Right lobe of liver (tissue), 6 donors: ENCODE measurements at regions of chr19 and their contacts with region 1.

Region 1: DNA sequence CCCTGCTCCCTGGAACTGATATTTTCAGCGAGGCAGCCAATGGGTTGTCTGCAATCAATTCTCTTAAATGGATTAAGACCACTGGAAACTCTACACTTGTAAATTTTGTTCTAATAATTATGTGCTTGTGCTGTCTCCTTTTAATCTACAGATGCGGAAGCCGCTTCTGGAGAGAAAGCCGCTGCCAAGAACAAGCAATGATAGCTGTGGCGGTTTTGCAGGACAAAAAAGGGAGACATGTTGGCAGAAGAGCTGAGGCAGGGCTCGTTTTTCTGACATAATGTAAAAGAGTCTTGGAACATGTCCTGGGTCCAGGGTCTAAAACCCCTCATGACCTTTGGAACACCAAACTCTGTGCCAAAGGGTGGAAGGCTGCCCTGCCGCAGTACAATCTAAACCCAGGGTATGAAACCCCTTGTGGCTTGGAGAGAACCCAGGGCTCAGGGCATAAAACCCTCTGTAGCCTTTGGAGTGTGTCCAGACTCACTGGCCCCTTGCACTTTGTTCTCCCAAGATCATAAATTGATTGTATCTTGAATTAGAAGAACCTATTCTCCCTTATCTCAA is 12.7 kb downstream of the ZNF417 start:
- DNase-seq: peak in 1 of 3 donors; percentile 80
- ATAC-seq: peak; percentile 33 to 71 (median 57)
- H3K4me3 ChIP-seq: peak overlapping the region in 2 of 3 donors; percentile 13 to 17
- H3K27ac ChIP-seq: peak overlapping the region in 1 of 3 donors; percentile 55
- H3K4me1 ChIP-seq: peaks cover 0 to 31% (median 6%) of the 10 kb centered on the region in 4 donors
- H3K27me3 ChIP-seq: no peaks in the 10 kb centered on the region
- CTCF ChIP-seq: no peak
- POLR2A ChIP-seq: no peak

Region 2: DNA sequence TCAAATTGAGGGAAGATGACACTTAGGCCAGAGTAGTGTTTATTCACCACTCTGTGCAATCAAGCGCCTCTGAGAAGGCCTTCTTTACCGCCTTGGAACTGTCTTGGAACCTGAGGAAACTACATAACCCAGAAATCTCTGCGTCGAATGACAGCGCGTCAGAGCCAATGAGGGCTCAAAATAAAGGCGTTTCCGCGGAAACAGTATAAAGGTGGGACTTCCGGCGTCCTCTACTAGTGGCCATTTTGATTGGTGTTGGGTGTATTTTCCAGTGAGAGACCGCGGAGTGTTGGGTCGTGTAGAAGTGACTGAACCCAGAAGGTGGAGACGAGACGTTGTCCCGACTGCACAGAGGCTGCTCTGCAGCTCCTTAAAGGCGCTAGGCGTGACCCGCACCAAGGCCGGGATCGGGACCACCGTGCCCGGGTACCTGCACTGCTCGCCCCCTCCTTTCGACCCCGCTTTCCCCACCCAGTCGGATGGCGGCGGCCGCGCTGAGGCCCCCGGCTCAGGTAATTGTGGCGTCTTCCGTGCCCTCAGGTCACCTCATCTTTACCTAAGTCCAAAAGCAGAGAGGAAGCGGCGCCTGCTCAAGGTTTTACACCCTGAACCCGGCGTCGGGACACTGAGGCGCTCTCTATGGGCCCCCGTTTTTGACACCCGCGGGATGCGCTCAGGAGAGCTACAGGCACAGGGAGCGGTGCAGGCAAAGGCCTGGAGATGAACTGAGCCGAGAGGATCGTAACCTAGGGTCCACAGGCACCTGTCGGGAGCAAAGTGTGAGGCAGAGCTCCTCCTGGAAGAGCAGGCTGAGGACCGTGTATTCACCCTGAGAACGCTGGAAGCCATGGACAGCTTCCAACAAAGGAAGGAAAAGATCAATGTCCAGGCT is 156.9 kb before region 1 on chr19 and contains the start of gene ZNF776:
- intact Hi-C with region 1: loop called in 1 of 2 experiments (anchors 10 kb)
- DNase-seq: peak; percentile 74 to 86 (median 84)
- ATAC-seq: peak; percentile 97 to 99 (median 98)
- H3K4me3 ChIP-seq: peak within 1 kb of the TSS; percentile 82 to 96 (median 89)
- H3K27ac ChIP-seq: peak within 1 kb of the TSS; percentile 40 to 74 (median 41)
- H3K4me1 ChIP-seq: peaks cover 0 to 13% (median 0%) of the 10 kb centered on the region in 4 donors
- H3K27me3 ChIP-seq: no peaks in the 10 kb centered on the region
- CTCF ChIP-seq: no peak
- POLR2A ChIP-seq: no peak
- total RNA-seq, gene ZNF776: 3.7 to 11.6 (median 5.7) TPM

Region 3: DNA sequence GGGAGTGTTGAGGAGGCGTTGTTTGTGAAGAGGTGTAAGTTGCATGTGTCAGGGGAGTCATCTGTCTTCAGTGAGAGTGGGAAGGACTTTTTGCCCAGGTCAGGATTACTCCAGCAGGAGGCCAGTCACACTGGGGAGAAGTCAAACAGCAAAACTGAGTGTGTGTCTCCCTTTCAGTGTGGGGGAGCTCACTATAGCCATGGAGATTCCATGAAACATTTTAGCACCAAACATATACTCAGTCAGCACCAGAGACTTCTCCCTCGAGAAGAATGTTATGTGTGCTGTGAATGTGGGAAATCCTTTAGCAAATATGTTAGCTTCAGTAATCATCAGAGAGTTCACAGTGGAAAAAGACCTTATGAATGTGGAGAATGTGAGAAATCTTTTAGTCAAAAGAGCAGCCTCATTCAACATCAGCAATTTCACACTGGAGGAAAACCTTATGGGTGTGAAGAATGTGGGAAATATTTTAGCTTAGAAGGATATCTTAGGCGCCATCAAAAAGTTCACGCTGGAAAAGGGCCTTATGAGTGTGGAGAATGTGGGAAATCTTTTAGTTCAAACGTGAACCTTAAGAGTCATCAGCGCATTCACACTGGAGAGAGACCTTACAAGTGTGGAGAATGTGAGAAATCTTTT is 62.5 kb before region 1 on chr19:
- intact Hi-C with region 1: no loop called
- DNase-seq: no peak
- ATAC-seq: no peak
- H3K4me3 ChIP-seq: no peak overlapping the region
- H3K27ac ChIP-seq: no peak overlapping the region
- H3K4me1 ChIP-seq: no peaks in the 10 kb centered on the region
- H3K27me3 ChIP-seq: no peaks in the 10 kb centered on the region
- CTCF ChIP-seq: no peak
- POLR2A ChIP-seq: no peak